CD8-positive, alpha-beta T cell (primary cell): ENCODE measurements at regions of chr3 and their contacts with region 1.

Region 1: DNA sequence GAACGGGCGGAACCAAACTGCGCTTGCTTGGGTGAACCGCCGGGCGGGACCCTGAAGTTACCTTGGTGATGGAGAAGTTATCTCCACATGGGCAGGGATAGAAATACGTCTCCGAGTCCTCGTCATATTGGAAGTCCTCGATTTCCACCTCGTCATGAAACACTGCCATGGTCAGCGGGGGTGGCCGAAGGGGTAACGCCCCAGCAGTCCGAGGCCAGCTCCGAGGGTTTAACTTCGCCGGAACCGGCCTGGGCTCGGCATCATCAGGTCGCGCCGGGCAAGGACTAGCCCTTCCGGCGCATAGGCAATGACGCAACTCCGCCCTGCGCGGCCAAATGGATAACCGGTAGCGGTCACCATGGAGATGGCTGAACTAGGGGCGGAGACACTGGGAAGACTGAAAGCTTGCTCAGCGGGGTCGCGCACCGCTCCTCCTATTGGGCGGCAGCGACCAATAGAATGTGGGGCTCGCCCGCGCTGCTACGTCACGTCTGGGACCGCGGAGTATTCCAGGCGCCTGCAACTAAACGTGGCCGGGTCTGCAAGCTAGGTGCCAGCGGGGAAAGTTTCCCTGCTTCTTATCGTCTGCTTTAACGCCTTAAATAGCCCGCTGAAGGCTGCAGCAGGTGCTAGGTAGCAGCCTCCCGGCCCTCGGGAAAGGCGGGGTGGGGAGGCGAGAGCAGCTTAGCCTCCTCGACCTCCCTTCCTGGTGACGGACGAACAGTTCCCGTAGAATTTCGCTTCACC is at the starts of genes DPH3 and OXNAD1:
- DNase-seq: peak; percentile 98 to 100 (median 99)
- ATAC-seq: peak; percentile 90
- H3K4me3 ChIP-seq: peak within 1 kb of the TSS; percentile 72 to 97
- H3K4me3 Mint-ChIP-seq: peak within 1 kb of the TSS; percentile 100
- H3K27ac ChIP-seq: peak within 1 kb of the TSS; percentile 92 to 97
- H3K27ac Mint-ChIP-seq: peak within 1 kb of the TSS; percentile 99
- H3K4me1 ChIP-seq: peaks cover 21% of the 10 kb centered on the region
- H3K4me1 Mint-ChIP-seq: peaks cover 44% of the 10 kb centered on the region
- H3K27me3 ChIP-seq: no peaks in the 10 kb centered on the region
- H3K27me3 Mint-ChIP-seq: no peaks in the 10 kb centered on the region
- CTCF ChIP-seq: no peak
- total RNA-seq, gene DPH3: 9.7 to 13.9 TPM
- total RNA-seq, gene OXNAD1: 156 TPM

Region 2: DNA sequence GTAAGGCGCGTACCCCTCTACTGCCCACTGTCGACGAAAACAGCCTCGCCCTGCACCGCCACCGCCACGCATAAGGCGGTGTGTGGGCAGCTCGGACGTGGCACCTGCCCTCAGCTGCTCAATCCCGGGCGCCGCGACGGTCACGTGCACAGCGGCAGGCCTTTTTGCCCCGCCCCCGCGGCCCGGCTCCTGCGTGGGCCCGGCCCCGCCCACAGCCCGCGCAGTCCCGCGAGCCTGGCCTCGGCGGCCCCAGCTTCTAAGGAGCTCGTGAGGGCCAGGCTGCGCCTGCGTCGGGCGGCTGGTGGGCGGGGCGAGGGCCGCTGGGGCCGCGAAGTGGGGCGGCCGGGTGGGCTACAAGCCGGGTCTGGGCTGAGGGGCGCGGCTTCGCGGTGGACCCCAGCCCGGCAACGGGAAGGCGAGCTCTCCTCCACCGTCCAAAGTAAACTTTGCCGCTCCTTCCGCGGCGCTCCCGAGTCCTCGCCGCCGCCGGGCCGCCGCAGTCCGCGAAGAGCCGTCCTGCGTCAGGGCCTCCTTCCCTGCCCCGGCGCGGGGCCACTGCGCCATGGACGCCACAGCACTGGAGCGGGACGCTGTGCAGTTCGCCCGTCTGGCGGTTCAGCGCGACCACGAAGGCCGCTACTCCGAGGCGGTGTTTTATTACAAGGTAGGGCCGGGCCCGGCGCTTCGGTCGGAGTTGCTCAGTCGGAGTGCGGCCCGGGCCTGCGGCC is 1058.8 kb before region 1 on chr3 and contains the start of gene CAPN7:
- CTCF ChIA-PET with region 1: no interaction called
- POLR2A ChIA-PET with region 1: no interaction called
- intact Hi-C with region 1: loop called in 1 of 2 experiments (anchors 5 kb)
- DNase-seq: peak; percentile 88 to 98 (median 93)
- ATAC-seq: peak; percentile 91
- H3K4me3 ChIP-seq: peak within 1 kb of the TSS; percentile 79 to 82
- H3K4me3 Mint-ChIP-seq: peak within 1 kb of the TSS; percentile 89
- H3K27ac ChIP-seq: peak within 1 kb of the TSS; percentile 85 to 88
- H3K27ac Mint-ChIP-seq: peak within 1 kb of the TSS; percentile 87
- H3K4me1 ChIP-seq: peaks cover 21% of the 10 kb centered on the region
- H3K4me1 Mint-ChIP-seq: peaks cover 32% of the 10 kb centered on the region
- H3K27me3 ChIP-seq: no peaks in the 10 kb centered on the region
- H3K27me3 Mint-ChIP-seq: no peaks in the 10 kb centered on the region
- CTCF ChIP-seq: no peak
- total RNA-seq, gene CAPN7: 59.7 to 62.6 TPM

Region 3: GRCh38 chr3:15859507-15860013 is 405.3 kb before region 1 on chr3:
- CTCF ChIA-PET with region 1: no interaction called
- POLR2A ChIA-PET with region 1: no interaction called
- intact Hi-C with region 1: loop called (anchors 5 kb)
- DNase-seq: peak; percentile 42 to 88 (median 73)
- ATAC-seq: peak; percentile 78
- H3K4me3 ChIP-seq: peak overlapping the region; percentile 73 to 86
- H3K4me3 Mint-ChIP-seq: peak overlapping the region; percentile 97
- H3K27ac ChIP-seq: peak overlapping the region in 1 of 2 experiments; percentile 46
- H3K27ac Mint-ChIP-seq: peak overlapping the region; percentile 95
- H3K4me1 ChIP-seq: peaks cover 20% of the 10 kb centered on the region
- H3K4me1 Mint-ChIP-seq: peaks cover 35% of the 10 kb centered on the region
- H3K27me3 ChIP-seq: no peaks in the 10 kb centered on the region
- H3K27me3 Mint-ChIP-seq: no peaks in the 10 kb centered on the region
- CTCF ChIP-seq: no peak

Region 4: DNA sequence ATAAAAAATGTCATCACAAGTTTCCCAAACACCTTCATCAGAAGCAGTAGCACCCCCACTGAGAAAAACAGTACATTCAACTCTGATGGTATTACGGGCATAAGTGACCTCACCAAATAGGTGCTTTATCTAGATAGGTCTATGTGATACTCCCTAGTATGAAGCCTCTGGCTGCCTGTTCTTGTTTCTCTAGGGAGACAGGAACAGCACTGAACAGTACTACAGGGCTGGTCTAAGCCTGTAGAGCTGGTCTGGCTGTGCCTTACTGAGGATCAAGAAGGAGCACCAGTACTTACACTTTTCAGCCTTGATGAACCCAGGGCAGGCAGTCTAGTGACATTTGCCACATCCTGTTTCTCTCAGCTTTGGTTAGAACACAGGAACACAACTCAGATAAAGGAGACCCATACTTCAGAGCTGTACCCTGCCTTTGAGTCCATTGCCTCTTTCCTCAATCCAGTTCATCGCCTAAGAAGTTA is 36.0 kb after region 1 on chr3:
- CTCF ChIA-PET with region 1: interaction called, 7 read pairs
- POLR2A ChIA-PET with region 1: interaction called, 16 read pairs
- intact Hi-C with region 1: no loop called
- DNase-seq: peak in 8 of 9 experiments; percentile 44 to 89 (median 65)
- ATAC-seq: peak; percentile 66
- H3K4me3 ChIP-seq: peak overlapping the region; percentile 20 to 32
- H3K4me3 Mint-ChIP-seq: peak overlapping the region; percentile 87
- H3K27ac ChIP-seq: peak overlapping the region; percentile 37 to 74
- H3K27ac Mint-ChIP-seq: peak overlapping the region; percentile 95
- H3K4me1 ChIP-seq: peaks cover 94% of the 10 kb centered on the region
- H3K4me1 Mint-ChIP-seq: peaks cover 95% of the 10 kb centered on the region
- H3K27me3 ChIP-seq: no peaks in the 10 kb centered on the region
- H3K27me3 Mint-ChIP-seq: no peaks in the 10 kb centered on the region
- CTCF ChIP-seq: no peak

Region 5: DNA sequence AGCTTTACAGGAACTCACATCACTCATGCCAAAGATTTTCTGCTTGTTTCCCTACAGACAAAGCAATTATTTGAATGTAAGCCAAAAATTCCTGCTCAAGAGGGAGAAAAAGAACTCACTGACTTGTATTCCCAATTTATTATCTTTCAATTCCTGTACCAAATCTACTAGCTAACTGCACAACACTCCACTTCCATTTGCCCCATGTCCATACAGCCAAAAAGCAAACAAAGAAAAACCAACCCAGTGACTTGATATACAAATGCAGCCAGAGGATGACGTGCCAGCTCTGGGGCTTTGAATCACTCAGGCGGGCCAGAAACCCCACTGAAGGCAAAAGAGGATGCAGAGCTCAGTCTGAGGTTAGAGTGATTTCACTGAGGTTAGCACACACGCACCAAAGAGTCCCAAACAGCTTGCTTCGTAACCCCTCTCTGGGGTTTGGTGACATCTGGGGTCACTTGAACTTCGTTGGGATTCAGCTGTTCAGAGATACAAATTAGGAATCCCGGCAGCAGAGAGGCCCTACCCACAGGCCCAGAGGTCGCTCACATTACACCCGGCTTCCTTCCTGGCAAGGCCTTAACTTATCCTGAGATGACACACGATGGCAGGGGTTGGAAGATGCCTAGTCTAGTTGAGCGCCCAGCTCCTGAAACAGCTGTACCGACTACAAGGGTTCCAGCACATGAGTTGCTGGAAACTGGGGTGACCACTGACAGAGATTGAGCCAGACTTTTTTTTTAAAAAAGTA is 247.0 kb after region 1 on chr3:
- CTCF ChIA-PET with region 1: interaction called, 6 read pairs
- POLR2A ChIA-PET with region 1: interaction called, 7 read pairs
- intact Hi-C with region 1: loop called (anchors 1 kb)
- DNase-seq: peak; percentile 59 to 97 (median 78)
- ATAC-seq: peak; percentile 75
- H3K4me3 ChIP-seq: peak overlapping the region; percentile 86 to 92
- H3K4me3 Mint-ChIP-seq: peak overlapping the region; percentile 96
- H3K27ac ChIP-seq: peak overlapping the region; percentile 78 to 92
- H3K27ac Mint-ChIP-seq: peak overlapping the region; percentile 86
- H3K4me1 ChIP-seq: peaks cover 79% of the 10 kb centered on the region
- H3K4me1 Mint-ChIP-seq: peaks cover 85% of the 10 kb centered on the region
- H3K27me3 ChIP-seq: no peaks in the 10 kb centered on the region
- H3K27me3 Mint-ChIP-seq: no peaks in the 10 kb centered on the region
- CTCF ChIP-seq: no peak

Region 6: GRCh38 chr3:16665282-16665741 is 400.4 kb after region 1 on chr3:
- CTCF ChIA-PET with region 1: no interaction called
- POLR2A ChIA-PET with region 1: no interaction called
- intact Hi-C with region 1: no loop called
- DNase-seq: no peak
- ATAC-seq: no peak
- H3K4me3 ChIP-seq: no peak overlapping the region
- H3K4me3 Mint-ChIP-seq: no peak overlapping the region
- H3K27ac ChIP-seq: no peak overlapping the region
- H3K27ac Mint-ChIP-seq: no peak overlapping the region
- H3K4me1 ChIP-seq: no peaks in the 10 kb centered on the region
- H3K4me1 Mint-ChIP-seq: no peaks in the 10 kb centered on the region
- H3K27me3 ChIP-seq: no peaks in the 10 kb centered on the region
- H3K27me3 Mint-ChIP-seq: no peaks in the 10 kb centered on the region
- CTCF ChIP-seq: no peak

Region 7: DNA sequence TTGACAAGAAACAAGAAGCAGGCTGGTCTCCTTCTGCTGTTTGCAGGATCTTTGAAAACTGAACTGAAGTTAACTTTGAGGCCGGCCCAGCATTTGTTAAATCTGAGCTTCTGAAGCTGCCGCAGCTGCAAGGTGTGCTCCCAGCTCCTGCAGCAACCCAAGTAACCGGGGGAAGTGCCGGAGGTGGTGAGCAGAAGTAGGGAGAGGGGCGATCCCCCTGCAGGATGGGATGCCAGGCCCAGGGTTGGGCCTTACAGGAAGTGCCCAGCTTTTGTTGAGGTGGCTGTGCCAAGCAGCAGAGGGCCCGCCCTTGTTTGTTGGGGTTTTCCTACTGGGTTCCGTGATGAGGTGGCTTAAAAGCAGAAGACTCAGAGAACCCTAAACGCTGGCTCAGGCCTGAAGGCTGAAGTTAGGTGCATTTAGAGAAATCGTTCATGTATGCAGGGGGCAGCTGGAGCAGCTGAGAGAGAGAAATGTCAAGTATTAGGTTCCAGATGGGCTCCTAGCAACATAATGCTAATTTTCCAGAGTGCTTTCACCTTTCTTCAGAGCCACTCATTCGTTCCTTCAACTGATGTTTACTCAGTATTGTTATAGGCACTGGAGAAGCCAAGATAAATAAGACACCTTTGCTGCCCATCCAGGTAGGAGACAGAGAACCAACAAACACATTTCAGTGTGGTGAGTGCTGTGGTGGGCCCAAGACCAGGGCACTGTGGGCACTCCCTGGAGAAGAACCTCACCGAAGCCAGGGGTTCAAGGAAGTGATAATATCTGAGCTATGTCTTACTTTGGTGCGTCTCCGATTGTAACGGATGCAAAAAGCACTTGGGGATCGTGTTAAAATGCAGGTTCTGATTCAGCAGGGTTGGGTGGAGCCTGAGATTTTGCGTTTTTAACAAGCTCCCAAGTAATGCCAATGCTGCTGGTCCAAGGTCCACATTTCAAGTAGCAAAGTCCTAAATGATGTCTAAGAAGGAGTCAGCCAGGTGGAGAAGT is 577.7 kb after region 1 on chr3:
- CTCF ChIA-PET with region 1: no interaction called
- POLR2A ChIA-PET with region 1: no interaction called
- intact Hi-C with region 1: loop called in 1 of 2 experiments (anchors 5 kb)
- DNase-seq: peak; percentile 48 to 91 (median 77)
- ATAC-seq: peak; percentile 90
- H3K4me3 ChIP-seq: peak overlapping the region; percentile 35 to 42
- H3K4me3 Mint-ChIP-seq: peak overlapping the region; percentile 80
- H3K27ac ChIP-seq: peak overlapping the region; percentile 63 to 89
- H3K27ac Mint-ChIP-seq: peak overlapping the region; percentile 98
- H3K4me1 ChIP-seq: peaks cover 60% of the 10 kb centered on the region
- H3K4me1 Mint-ChIP-seq: peaks cover 81% of the 10 kb centered on the region
- H3K27me3 ChIP-seq: no peaks in the 10 kb centered on the region
- H3K27me3 Mint-ChIP-seq: no peaks in the 10 kb centered on the region
- CTCF ChIP-seq: no peak

Region 8: DNA sequence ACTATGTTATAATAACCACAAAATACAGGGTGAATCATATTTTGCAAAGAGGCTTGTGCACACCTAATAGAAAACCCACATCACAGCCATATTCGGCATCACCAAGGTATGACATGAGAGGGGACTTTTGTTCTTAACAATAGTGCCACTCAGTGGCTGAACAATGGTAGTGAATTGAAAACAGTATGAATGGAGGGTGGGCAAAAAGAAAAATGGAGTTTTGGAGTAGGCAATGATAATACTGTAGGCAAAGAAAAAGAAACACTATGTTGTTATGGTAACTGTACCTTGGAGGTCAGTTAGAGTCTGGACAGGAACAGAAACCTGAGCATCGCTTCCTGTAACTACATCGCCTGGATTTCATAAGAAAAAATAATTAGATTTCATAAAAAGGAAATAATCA is 968.5 kb after region 1 on chr3:
- CTCF ChIA-PET with region 1: no interaction called
- POLR2A ChIA-PET with region 1: no interaction called
- intact Hi-C with region 1: loop called in 1 of 2 experiments (anchors 5 kb)
- DNase-seq: peak in 7 of 9 experiments; percentile 7 to 79 (median 35)
- ATAC-seq: peak; percentile 99
- H3K4me3 ChIP-seq: no peak overlapping the region
- H3K4me3 Mint-ChIP-seq: no peak overlapping the region
- H3K27ac ChIP-seq: no peak overlapping the region
- H3K27ac Mint-ChIP-seq: peak overlapping the region; percentile 3
- H3K4me1 ChIP-seq: peaks cover 20% of the 10 kb centered on the region
- H3K4me1 Mint-ChIP-seq: peaks cover 24% of the 10 kb centered on the region
- H3K27me3 ChIP-seq: no peaks in the 10 kb centered on the region
- H3K27me3 Mint-ChIP-seq: no peaks in the 10 kb centered on the region
- CTCF ChIP-seq: peak; percentile 84